Left ventricle myocardium superior (tissue), 1 donor: ENCODE measurements at regions of chr6 and their contacts with region 1.

Region 1: GRCh38 chr6:30533460-30534294 is 22.6 kb downstream of the GNL1 start:
- DNase-seq: no peak
- ATAC-seq: no peak

Region 2: DNA sequence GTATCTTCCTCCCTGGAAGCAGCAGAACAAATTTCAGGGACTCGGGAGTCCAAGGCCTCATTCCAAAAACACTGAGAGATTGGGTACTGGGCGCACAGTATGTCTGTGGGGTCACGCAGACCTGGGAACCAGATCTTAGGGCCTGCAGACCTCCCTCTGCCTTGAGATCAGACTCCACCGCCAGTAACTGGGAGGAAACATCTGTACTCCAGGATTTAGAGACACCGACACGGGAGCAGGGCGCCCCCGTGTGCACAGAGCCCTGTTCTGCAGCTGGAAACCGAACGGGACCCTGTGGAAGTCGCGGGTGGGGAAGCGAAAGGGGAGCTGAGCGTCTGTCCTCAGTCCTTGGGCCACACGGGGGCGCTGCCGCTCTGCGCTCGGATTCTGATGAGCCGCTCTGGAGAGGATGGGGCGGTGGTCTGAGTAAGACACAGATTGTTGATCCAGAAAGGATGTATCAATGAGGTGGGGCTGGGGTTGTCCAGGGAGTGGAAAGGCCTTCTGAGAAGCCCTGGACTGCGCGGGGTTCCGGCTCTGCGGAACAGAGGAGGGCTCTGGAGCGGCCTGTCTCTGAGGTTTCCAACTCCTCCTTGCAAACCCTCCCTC is 80.1 kb before region 1 on chr6:
- intact Hi-C with region 1: no loop called
- DNase-seq: peak; percentile 91
- ATAC-seq: peak; percentile 87

Region 3: GRCh38 chr6:30489081-30490025 is 44.3 kb before region 1 on chr6 and contains the start of gene HLA-E:
- intact Hi-C with region 1: loop called (anchors 5 kb)
- DNase-seq: peak; percentile 86
- ATAC-seq: peak; percentile 97
- total RNA-seq, gene HLA-E: 155 TPM

Region 4: DNA sequence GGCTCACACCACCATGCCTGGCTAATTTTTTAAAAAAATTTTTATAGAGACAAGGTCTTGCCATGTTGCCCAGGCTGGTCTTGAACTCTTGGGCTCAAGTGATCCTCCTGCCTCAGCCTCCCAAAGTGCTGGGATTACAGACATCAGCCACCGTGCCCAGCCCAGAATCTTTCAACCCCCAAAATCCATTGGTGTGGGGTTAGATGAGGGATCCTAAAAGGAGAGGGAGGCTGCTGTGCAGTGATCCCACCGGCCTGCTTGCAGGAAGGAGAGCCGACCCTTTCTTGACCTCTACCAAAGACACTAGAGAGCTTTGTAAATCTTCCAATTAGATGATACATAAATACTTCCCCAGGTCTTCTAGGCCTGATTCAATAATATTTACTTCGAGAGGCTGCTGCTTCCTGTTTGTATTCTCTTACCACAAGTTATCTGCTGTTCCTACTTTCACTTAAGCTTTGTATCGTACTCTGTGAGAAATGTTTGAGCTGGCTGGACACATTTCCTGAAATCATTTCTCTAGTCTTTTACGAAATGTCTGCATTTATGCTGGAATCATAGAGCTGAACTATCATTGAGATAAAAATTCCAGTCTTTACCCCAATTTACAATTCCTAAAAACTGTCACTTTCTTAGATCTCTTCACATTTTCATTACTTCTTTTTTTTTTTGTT is 260.0 kb after region 1 on chr6:
- intact Hi-C with region 1: no loop called
- DNase-seq: no peak
- ATAC-seq: peak; percentile 67